IMR-90 (cell line): ENCODE measurements at regions of chr4 and their contacts with region 1.

Region 1: DNA sequence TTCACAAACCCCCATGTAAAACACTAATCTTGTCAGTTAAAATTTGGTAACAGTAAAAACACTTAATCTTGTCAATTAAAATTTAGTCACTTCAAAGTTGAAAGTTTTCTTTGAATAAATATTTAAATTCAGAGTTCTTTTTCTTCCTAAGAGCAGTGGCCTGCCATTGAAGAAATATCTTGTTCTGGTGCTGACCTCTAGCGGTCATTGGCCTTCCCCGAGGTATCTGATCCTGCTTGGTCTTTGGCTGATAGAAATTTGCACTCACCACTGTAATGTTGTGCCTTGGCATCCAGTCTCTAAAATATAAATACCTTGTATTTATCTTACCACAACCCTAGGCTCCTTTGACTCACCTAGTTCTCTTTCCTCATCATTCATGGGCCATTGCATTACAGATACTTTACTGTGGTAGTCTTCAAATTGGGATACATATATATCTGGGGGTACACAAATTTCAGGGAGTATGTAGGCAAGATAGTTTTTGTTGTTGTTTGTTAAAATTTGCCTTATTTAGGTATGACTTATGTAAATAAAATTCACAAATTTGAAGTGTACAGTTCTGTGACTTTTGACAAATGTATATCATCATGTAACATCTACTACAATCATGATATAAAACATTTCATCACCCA is 6.7 kb upstream of the ART3 start:
- DNase-seq: peak; percentile 76
- ATAC-seq: peak; percentile 99
- H3K4me3 ChIP-seq: no peak overlapping the region
- H3K27ac ChIP-seq: no peak overlapping the region
- H3K4me1 ChIP-seq: no peaks in the 10 kb centered on the region
- H3K27me3 ChIP-seq: no peaks in the 10 kb centered on the region; the same call in 1 of the 2 replicates
- CTCF ChIP-seq: peak; percentile 92
- POLR2A ChIP-seq: peak; percentile 36; the same call in 1 of the 2 replicates
- RAD21 ChIP-seq: peak; percentile 90

Region 2: GRCh38 chr4:75881476-75881875 is 186.3 kb before region 1 on chr4:
- CTCF ChIA-PET with region 1: no interaction called
- POLR2A ChIA-PET with region 1: no interaction called
- dilution Hi-C with region 1: no loop called
- in situ Hi-C with region 1: no loop called
- intact Hi-C with region 1: no loop called
- DNase-seq: no peak
- ATAC-seq: no peak
- H3K4me3 ChIP-seq: no peak overlapping the region
- H3K27ac ChIP-seq: no peak overlapping the region
- H3K4me1 ChIP-seq: no peaks in the 10 kb centered on the region
- H3K27me3 ChIP-seq: peaks cover 17% of the 10 kb centered on the region
- CTCF ChIP-seq: no peak
- POLR2A ChIP-seq: no peak
- RAD21 ChIP-seq: no peak

Region 3: GRCh38 chr4:75995727-75996126 is 72.0 kb before region 1 on chr4:
- CTCF ChIA-PET with region 1: interaction called, 13 read pairs
- POLR2A ChIA-PET with region 1: no interaction called
- dilution Hi-C with region 1: no loop called
- in situ Hi-C with region 1: loop called (anchors 5 kb)
- intact Hi-C with region 1: loop called (anchors 1 kb)
- DNase-seq: peak; percentile 65
- ATAC-seq: peak; percentile 59
- H3K4me3 ChIP-seq: no peak overlapping the region
- H3K27ac ChIP-seq: peak overlapping the region; percentile 50; the same call in 1 of the 2 replicates
- H3K4me1 ChIP-seq: peaks cover 3% of the 10 kb centered on the region; the same call in 1 of the 2 replicates
- H3K27me3 ChIP-seq: no peaks in the 10 kb centered on the region
- CTCF ChIP-seq: peak; percentile 72
- POLR2A ChIP-seq: no peak
- RAD21 ChIP-seq: peak; percentile 79

Region 4: GRCh38 chr4:76035141-76035540 is 32.6 kb before region 1 on chr4:
- CTCF ChIA-PET with region 1: no interaction called
- POLR2A ChIA-PET with region 1: no interaction called
- dilution Hi-C with region 1: no loop called
- in situ Hi-C with region 1: no loop called
- intact Hi-C with region 1: no loop called
- DNase-seq: no peak
- ATAC-seq: no peak
- H3K4me3 ChIP-seq: no peak overlapping the region
- H3K27ac ChIP-seq: no peak overlapping the region
- H3K4me1 ChIP-seq: no peaks in the 10 kb centered on the region
- H3K27me3 ChIP-seq: peaks cover 3% of the 10 kb centered on the region; the same call in 1 of the 2 replicates
- CTCF ChIP-seq: no peak
- POLR2A ChIP-seq: no peak
- RAD21 ChIP-seq: no peak